ENCODE measurements at regions of chr1 and their contacts with region 1.

Region 1: DNA sequence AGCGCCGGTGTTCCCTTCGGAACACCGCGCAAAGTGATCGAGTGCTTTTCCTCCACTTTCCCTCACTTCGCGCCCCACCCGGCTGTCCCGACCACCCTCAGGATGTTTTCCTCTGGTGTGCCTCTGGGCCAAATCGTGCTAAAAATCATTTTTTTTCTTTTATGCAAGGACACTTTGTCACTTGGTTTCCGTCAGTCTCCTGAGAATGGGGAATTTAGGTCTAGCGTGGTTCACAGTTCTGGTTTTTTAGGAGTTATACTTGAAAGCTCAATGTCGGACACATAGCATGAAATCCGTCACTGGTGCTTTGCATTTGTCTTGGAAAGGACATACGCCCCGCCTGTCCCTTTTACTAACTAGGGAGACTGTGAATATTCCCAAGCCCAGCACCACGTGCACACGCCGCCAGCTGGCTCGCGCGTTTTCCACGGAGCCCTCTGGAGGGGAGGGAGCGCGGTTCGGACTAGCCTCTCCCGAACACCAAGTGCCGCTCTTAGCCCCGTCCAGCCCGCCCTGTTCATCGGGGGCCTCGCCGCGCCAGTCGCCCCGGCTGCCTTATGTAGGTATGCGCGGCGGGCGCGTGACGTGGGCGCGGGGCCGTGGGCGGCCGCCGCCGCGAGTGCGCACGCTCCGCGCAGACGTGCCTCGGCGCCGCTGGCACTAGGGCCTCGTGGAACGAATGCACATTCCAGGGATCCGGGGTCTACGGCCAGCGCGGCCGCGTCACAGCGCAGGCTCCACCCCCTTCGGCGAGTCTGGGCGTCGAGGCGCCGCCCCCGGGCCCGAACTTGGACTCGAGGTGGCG is 572 bp upstream of the IRF2BP2 start:
- DNase-seq: peak; percentile 90
- H3K4me3 Mint-ChIP-seq: peak overlapping the region; percentile 92
- H3K27ac Mint-ChIP-seq: peak overlapping the region; percentile 99
- H3K4me1 Mint-ChIP-seq: peaks cover 49% of the 10 kb centered on the region
- H3K27me3 Mint-ChIP-seq: no peaks in the 10 kb centered on the region

Region 2: GRCh38 chr1:233993651-233994050 is 616.9 kb before region 1 on chr1:
- intact Hi-C with region 1: no loop called
- DNase-seq: no peak
- H3K4me3 Mint-ChIP-seq: no peak overlapping the region
- H3K27ac Mint-ChIP-seq: no peak overlapping the region
- H3K4me1 Mint-ChIP-seq: no peaks in the 10 kb centered on the region
- H3K27me3 Mint-ChIP-seq: peaks cover 10% of the 10 kb centered on the region

Region 3: DNA sequence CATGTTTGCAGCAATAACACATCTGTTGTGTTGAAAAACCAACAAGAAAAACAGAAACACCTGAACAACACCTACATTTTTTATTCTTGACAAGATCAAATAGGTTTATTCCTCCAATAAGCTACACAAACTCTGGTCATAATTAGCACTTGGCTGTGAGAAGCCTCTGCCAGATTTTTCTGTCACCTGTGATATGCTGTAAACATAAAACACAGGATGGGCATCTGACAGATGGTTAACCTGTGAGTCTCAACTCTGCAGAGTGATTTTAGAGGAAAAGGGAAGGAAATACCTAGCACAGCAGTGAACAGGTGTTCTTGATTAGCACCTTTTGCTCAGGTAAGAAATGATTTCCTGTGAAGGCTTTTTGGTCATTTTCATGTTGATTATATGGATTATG is 412.7 kb before region 1 on chr1:
- intact Hi-C with region 1: no loop called
- DNase-seq: no peak
- H3K4me3 Mint-ChIP-seq: no peak overlapping the region
- H3K27ac Mint-ChIP-seq: no peak overlapping the region
- H3K4me1 Mint-ChIP-seq: peaks cover 10% of the 10 kb centered on the region
- H3K27me3 Mint-ChIP-seq: peaks cover 25% of the 10 kb centered on the region

Region 4: GRCh38 chr1:234486498-234487448 is 123.8 kb before region 1 on chr1:
- intact Hi-C with region 1: loop called (anchors 1 kb)
- DNase-seq: peak; percentile 31
- H3K4me3 Mint-ChIP-seq: peak overlapping the region; percentile 34
- H3K27ac Mint-ChIP-seq: peak overlapping the region; percentile 97
- H3K4me1 Mint-ChIP-seq: peaks cover 49% of the 10 kb centered on the region
- H3K27me3 Mint-ChIP-seq: peaks cover 16% of the 10 kb centered on the region

Region 5: GRCh38 chr1:234722904-234723720 is 112.6 kb after region 1 on chr1:
- intact Hi-C with region 1: loop called (anchors 1 kb)
- DNase-seq: peak; percentile 7
- H3K4me3 Mint-ChIP-seq: peak overlapping the region; percentile 70
- H3K27ac Mint-ChIP-seq: peak overlapping the region; percentile 97
- H3K4me1 Mint-ChIP-seq: peaks cover 79% of the 10 kb centered on the region
- H3K27me3 Mint-ChIP-seq: peaks cover 5% of the 10 kb centered on the region

Region 6: GRCh38 chr1:234875953-234876855 is 265.7 kb after region 1 on chr1:
- intact Hi-C with region 1: loop called (anchors 1 kb)
- DNase-seq: no peak
- H3K4me3 Mint-ChIP-seq: peak overlapping the region; percentile 11
- H3K27ac Mint-ChIP-seq: peak overlapping the region; percentile 88
- H3K4me1 Mint-ChIP-seq: peaks cover 55% of the 10 kb centered on the region
- H3K27me3 Mint-ChIP-seq: no peaks in the 10 kb centered on the region

Region 7: GRCh38 chr1:235011599-235012435 is 401.3 kb after region 1 on chr1:
- intact Hi-C with region 1: loop called (anchors 1 kb)
- DNase-seq: peak; percentile 97
- H3K4me3 Mint-ChIP-seq: peak overlapping the region; percentile 40
- H3K27ac Mint-ChIP-seq: peak overlapping the region; percentile 95
- H3K4me1 Mint-ChIP-seq: peaks cover 88% of the 10 kb centered on the region
- H3K27me3 Mint-ChIP-seq: peaks cover 5% of the 10 kb centered on the region

Region 8: GRCh38 chr1:235504496-235505222 is 894.1 kb after region 1 on chr1:
- intact Hi-C with region 1: loop called (anchors 5 kb)
- DNase-seq: peak; percentile 98
- H3K4me3 Mint-ChIP-seq: peak overlapping the region; percentile 92
- H3K27ac Mint-ChIP-seq: peak overlapping the region; percentile 97
- H3K4me1 Mint-ChIP-seq: peaks cover 41% of the 10 kb centered on the region
- H3K27me3 Mint-ChIP-seq: peaks cover 16% of the 10 kb centered on the region

Measured in activated T-helper 1 cell treated with anti-CD3 and anti-CD28 coated beads, Interleukin-12 subunit alpha, Interleukin-12 subunit beta, Interleukin-2, Interleukin-4 antibody, amounts not matched to agents 30 ng/mL and 10 ng/mL and 1 ng/mL, durations not matched to agents 14 hours and 24 hours and 36 hours (primary cell).